Transverse colon (tissue), 4 donors: ENCODE measurements at regions of chrX and their contacts with region 1.

Region 1: GRCh38 chrX:13074297-13075262 is 30.2 kb upstream of the FAM9C start:
- DNase-seq: no peak
- H3K4me3 ChIP-seq: no peak overlapping the region
- H3K27ac ChIP-seq: peak overlapping the region in 1 of 4 donors; percentile 19
- H3K4me1 ChIP-seq: peaks cover 0 to 36% (median 5%) of the 10 kb centered on the region in 4 donors
- H3K27me3 ChIP-seq: no peaks in the 10 kb centered on the region
- CTCF ChIP-seq: no peak
- EP300 ChIP-seq: no peak
- POLR2A ChIP-seq: no peak

Region 2: GRCh38 chrX:11864171-11864570 is 1210.4 kb before region 1 on chrX:
- in situ Hi-C with region 1: no loop called
- intact Hi-C with region 1: loop called (anchors 5 kb)
- DNase-seq: no peak
- H3K4me3 ChIP-seq: no peak overlapping the region
- H3K27ac ChIP-seq: no peak overlapping the region
- H3K4me1 ChIP-seq: no peaks in the 10 kb centered on the region
- H3K27me3 ChIP-seq: no peaks in the 10 kb centered on the region
- CTCF ChIP-seq: no peak
- EP300 ChIP-seq: no peak
- POLR2A ChIP-seq: no peak

Region 3: DNA sequence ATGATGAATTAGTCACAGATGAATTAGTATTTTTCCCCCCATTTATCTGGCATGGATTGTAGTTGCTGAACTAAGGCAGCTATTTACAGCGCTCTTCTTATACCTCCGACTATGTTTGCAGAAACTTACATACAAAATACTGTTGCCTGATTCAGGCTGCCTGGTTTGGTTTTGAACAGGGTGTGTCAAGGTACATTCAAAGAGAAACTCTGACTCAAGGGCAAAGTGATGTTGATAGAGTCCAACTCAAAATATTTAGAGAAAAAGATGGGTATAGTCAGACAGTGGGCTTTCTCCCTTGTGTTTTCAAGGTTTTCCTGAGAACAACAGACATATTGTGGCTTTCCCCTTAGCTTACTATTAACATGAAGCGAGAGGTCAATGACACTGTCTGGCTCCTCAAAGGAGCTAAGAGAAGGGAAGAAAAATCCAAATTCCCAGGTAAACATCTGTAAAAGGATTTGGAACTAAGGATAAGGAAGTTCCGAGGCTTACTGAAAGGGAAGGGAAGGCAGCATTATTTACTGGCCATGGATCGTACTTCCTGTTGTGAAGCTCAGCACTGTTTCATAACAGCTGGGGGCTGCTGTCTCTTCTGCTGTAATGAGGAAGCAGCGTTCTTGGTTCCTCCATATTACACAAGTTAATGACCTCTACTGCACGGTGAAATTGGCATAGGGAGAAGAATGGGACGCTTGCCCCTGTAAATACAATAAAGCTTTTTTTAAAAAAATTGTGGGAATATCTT is 61.0 kb before region 1 on chrX:
- in situ Hi-C with region 1: no loop called
- intact Hi-C with region 1: loop called (anchors 2 kb)
- DNase-seq: peak; percentile 51
- H3K4me3 ChIP-seq: no peak overlapping the region
- H3K27ac ChIP-seq: peak overlapping the region; percentile 35 to 81 (median 68)
- H3K4me1 ChIP-seq: peaks cover 0 to 16% (median 4%) of the 10 kb centered on the region in 4 donors
- H3K27me3 ChIP-seq: no peaks in the 10 kb centered on the region
- CTCF ChIP-seq: no peak
- EP300 ChIP-seq: no peak
- POLR2A ChIP-seq: no peak

Region 4: DNA sequence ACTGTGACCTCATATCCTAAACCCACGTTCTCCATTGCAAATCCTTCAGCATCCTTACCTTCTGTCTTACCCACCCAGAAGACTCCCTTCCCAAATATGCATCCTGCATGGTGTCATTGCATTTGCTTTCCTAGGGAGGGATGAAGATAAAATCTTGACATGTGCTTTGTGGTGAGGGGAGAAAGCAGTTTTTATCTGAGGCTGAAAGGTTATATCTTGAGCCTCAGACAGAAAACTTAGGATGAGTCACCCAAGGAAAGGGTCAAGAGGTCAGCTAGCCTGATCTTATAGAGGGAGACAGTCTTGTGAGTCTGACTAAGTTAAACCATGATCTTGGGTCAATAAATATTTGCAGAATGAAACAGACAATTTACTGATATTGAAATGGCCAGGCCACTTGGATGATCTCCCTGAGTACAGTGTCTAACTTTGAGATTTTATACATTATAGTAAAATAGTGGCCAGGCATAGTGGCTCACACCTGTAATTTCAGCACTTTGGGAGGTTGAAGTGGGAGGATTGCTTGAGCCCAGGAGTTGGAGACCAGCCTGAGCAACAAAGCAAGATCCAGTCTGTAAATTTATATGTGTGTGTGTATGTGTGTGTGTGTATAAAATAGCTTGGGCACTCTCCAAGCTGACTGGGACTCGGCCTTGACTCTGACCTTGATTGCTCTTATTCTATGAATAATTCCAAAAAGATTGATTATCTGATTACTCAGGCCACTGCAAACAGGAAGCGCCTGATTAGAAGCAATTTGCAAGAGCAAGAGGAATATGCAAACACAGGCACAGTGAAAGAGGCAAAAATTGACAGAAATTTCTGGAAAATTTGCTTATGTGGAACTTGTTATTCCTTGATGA is 14.7 kb before region 1 on chrX:
- in situ Hi-C with region 1: no loop called
- intact Hi-C with region 1: no loop called
- DNase-seq: no peak
- H3K4me3 ChIP-seq: no peak overlapping the region
- H3K27ac ChIP-seq: no peak overlapping the region
- H3K4me1 ChIP-seq: no peaks in the 10 kb centered on the region
- H3K27me3 ChIP-seq: no peaks in the 10 kb centered on the region
- CTCF ChIP-seq: no peak
- EP300 ChIP-seq: no peak
- POLR2A ChIP-seq: no peak